Colonic mucosa (tissue), 4 donors: ENCODE measurements at regions of chr9 and their contacts with region 1.

Region 1: DNA sequence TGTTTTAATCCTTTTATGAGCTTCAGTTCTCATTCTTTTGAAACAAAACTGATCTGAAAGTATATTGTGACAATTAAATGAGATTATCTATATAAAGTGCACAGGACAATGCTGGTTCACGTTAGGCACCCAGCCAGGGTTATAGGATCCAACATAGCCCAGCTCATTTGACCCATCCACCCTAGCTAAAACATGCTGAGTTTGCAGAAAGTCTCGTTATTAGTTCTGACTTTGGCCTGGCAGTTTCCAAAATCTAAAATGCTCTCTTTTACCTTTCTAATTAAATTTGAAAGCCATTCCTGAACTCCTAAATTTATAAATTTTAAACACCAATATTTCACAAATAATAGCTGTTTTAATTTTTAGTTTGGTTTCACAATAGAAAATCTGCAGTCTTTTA is 131.9 kb upstream of the PTPRD start:
- DNase-seq: no peak
- H3K4me3 ChIP-seq: no peak overlapping the region
- H3K27ac ChIP-seq: no peak overlapping the region
- H3K4me1 ChIP-seq: no peaks in the 10 kb centered on the region
- H3K27me3 ChIP-seq: no peaks in the 10 kb centered on the region
- CTCF ChIP-seq: no peak

Region 2: GRCh38 chr9:10678790-10679189 is 65.9 kb before region 1 on chr9:
- intact Hi-C with region 1: loop called (anchors 10 kb)
- DNase-seq: no peak
- H3K4me3 ChIP-seq: no peak overlapping the region
- H3K27ac ChIP-seq: no peak overlapping the region
- H3K4me1 ChIP-seq: no peaks in the 10 kb centered on the region
- H3K27me3 ChIP-seq: no peaks in the 10 kb centered on the region
- CTCF ChIP-seq: no peak